HCT116 (cell line): ENCODE measurements at regions of chr4 and their contacts with region 1.

Region 1: DNA sequence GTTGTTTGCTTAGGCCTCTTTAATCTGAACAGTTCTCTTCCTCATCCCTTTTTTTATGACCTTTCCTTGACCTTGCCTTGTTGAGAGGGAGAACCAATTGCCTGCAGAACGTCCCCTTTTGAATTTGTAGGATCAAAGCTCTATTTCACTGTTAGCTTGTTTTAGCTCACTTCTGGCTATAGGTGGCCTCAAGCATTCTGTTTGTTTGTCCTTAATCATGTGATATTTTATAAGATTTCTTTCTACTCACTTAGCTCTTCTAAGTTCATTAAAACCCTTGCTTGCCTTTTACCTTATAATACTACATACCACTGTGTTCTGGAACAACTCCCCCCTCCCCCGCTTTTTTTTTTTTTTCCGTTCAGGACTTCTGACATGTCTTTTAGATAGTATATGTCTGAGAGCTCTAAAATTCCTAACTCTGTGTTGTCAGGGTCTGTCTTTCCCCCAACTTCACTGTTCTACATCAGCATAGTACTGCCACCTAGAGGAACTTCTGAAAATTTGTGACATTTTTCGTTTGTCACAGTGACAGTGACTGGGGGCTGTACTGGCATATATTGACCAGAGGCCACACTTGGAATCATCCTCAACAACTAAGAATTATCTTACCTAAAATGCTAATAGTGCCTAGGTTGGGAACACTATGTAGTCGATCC is 128.5 kb downstream of the LARP7 start:
- DNase-seq: peak; percentile 43
- ATAC-seq: peak; percentile 83
- H3K4me3 ChIP-seq: no peak overlapping the region
- H3K27ac ChIP-seq: no peak overlapping the region
- H3K4me1 ChIP-seq: peaks cover 0 to 8% of the 10 kb centered on the region in 2 experiments; a peak in 2 of 4 replicates
- H3K27me3 ChIP-seq: no peaks in the 10 kb centered on the region
- CTCF ChIP-seq: peak; percentile 44 to 66 (median 53); a peak in 5 of 6 replicates
- POLR2A ChIP-seq: no peak
- RAD21 ChIP-seq: peak; percentile 64

Region 2: DNA sequence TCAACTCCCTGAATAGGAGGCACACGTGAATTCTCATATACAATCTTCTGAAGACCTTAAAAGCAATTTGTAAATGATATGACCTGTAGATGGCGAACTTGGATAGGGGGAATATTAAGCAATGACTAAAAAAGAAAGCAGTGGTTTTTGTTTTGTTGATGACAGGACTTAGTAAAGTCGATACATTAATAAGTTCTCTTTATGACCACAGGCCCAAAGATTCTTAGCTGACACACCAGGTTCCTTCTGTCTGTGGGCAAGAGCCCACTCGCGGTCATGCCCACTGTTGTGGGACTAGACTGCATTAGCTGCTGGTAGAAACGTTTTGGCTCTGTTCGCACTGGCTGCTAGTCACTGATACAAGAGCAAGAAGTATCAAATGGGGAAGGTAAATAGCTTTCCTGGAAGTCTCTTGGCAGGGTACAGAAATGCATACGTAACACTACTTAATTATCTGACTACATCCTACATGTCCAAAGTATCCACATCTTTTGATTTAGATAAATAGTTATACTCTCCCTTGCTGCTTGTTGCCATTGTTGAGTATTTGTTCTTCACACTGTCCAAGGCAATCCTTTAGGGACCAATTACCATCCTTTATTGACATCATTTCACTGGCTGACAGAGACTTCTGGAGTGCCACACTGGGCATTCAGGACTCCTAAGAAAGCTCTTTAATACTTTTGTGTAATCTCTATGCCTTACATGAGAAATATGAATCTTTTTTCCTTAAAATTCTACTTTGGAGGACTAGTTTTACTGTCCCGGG is 437.3 kb before region 1 on chr4:
- CTCF ChIA-PET with region 1: no interaction called
- POLR2A ChIA-PET with region 1: no interaction called
- RAD21 ChIA-PET with region 1: no interaction called
- intact Hi-C with region 1: loop called (anchors 5 kb)
- DNase-seq: peak; percentile 32
- ATAC-seq: peak; percentile 63; the same call in 1 of the 2 replicates
- H3K4me3 ChIP-seq: no peak overlapping the region
- H3K27ac ChIP-seq: no peak overlapping the region
- H3K4me1 ChIP-seq: no peaks in the 10 kb centered on the region
- H3K27me3 ChIP-seq: no peaks in the 10 kb centered on the region
- CTCF ChIP-seq: peak; percentile 37 to 67 (median 62); a peak in 5 of 6 replicates
- POLR2A ChIP-seq: no peak
- RAD21 ChIP-seq: peak; percentile 73

Region 3: DNA sequence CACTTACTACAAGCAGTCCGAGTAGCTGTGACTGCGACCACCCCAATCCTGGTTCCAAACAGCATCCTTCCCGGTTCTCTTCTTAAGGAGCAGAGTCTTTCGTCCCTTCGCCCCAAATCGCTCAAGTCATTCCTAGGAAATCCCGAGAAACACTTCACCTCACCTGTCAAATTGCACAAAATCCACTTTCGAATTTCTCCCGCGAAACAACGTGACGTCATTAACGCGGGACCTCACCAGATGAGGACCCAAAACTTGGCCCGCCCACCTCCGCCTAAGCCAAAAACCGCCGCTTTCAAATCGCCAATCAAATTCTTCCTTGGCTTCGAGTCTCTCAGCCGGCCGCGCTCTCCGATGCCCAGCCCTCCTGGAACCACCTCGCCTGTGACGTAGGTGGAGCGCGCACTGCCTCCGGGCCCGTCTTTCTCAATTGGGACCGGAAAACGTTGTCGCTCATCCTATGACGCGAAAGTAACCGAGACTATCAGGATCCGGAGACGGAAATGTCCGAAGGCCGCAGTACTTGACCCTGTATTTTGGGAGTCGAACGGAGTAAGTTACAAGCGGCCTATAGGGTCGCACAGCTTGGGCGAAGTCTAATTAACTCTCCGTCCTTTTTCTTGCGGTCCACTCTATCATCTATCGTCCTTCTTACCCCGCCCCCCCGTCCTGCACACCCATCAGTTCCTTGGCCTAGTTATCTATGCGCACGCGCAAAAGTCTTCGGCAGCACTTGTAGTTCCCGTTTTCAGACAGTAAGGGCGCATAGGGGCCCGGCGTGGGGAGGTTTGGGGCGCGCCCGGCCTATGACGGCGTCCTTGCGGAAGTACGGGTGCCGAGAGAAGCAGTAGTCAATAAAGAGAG is 128.5 kb before region 1 on chr4 and contains the starts of genes LARP7 and ZGRF1:
- CTCF ChIA-PET with region 1: interaction called, 15 read pairs
- POLR2A ChIA-PET with region 1: no interaction called
- RAD21 ChIA-PET with region 1: no interaction called
- intact Hi-C with region 1: loop called (anchors 1 kb)
- DNase-seq: peak; percentile 99
- ATAC-seq: peak; percentile 93
- H3K4me3 ChIP-seq: peak within 1 kb of the TSS; percentile 72 to 87
- H3K27ac ChIP-seq: peak within 1 kb of the TSS; percentile 66
- H3K4me1 ChIP-seq: peaks cover 3 to 17% of the 10 kb centered on the region in 2 experiments; a peak in 3 of 4 replicates
- H3K27me3 ChIP-seq: no peaks in the 10 kb centered on the region
- CTCF ChIP-seq: peak; percentile 18 to 67 (median 67); a peak in 4 of 6 replicates
- POLR2A ChIP-seq: peak; percentile 21
- RAD21 ChIP-seq: no peak
- total RNA-seq, gene LARP7: 39.5 TPM
- total RNA-seq, gene ZGRF1: 21.4 TPM

Region 4: DNA sequence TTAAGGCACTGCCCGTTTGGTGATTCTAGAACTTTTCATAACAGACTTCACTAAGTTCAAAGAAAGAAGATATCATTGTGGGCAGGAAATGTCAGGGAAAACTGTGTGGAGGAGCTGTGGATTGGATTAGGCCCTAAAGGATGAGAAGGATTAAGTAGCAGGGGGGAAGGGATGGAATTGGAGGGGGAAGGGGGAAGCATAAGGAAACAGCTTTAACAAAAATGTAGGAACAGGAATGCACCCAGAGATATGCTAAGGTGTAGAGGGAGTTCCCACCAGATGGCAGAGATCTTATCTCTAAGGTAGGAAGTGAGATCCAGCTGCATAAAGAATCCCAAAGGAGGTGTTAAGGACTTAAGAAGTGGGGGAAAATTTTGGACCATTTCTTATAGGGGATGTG is 14.0 kb before region 1 on chr4:
- CTCF ChIA-PET with region 1: interaction called, 15 read pairs
- POLR2A ChIA-PET with region 1: no interaction called
- RAD21 ChIA-PET with region 1: no interaction called
- intact Hi-C with region 1: no loop called
- DNase-seq: no peak
- ATAC-seq: no peak
- H3K4me3 ChIP-seq: no peak overlapping the region
- H3K27ac ChIP-seq: no peak overlapping the region
- H3K4me1 ChIP-seq: peaks cover 10 to 34% of the 10 kb centered on the region in 2 experiments
- H3K27me3 ChIP-seq: no peaks in the 10 kb centered on the region
- CTCF ChIP-seq: no peak
- POLR2A ChIP-seq: no peak
- RAD21 ChIP-seq: no peak

Region 5: GRCh38 chr4:112938461-112939058 is 173.1 kb after region 1 on chr4:
- CTCF ChIA-PET with region 1: interaction called, 25 read pairs
- POLR2A ChIA-PET with region 1: no interaction called
- RAD21 ChIA-PET with region 1: interaction called, 4 to 5 read pairs
- intact Hi-C with region 1: loop called (anchors 1 kb)
- DNase-seq: peak; percentile 31
- ATAC-seq: peak; percentile 59
- H3K4me3 ChIP-seq: no peak overlapping the region
- H3K27ac ChIP-seq: no peak overlapping the region
- H3K4me1 ChIP-seq: no peaks in the 10 kb centered on the region
- H3K27me3 ChIP-seq: no peaks in the 10 kb centered on the region
- CTCF ChIP-seq: peak; percentile 72 to 88 (median 86)
- POLR2A ChIP-seq: no peak
- RAD21 ChIP-seq: peak; percentile 81

Region 6: GRCh38 chr4:112951362-112952312 is 186.2 kb after region 1 on chr4:
- CTCF ChIA-PET with region 1: interaction called, 14 read pairs
- POLR2A ChIA-PET with region 1: no interaction called
- RAD21 ChIA-PET with region 1: no interaction called
- intact Hi-C with region 1: no loop called
- DNase-seq: no peak
- ATAC-seq: no peak
- H3K4me3 ChIP-seq: no peak overlapping the region
- H3K27ac ChIP-seq: no peak overlapping the region
- H3K4me1 ChIP-seq: no peaks in the 10 kb centered on the region
- H3K27me3 ChIP-seq: no peaks in the 10 kb centered on the region
- CTCF ChIP-seq: peak; percentile 32 to 66 (median 49); a peak in 5 of 6 replicates
- POLR2A ChIP-seq: no peak
- RAD21 ChIP-seq: 0 out of 2 replicates have a peak, but pooled peaks have one; percentile 10

Region 7: GRCh38 chr4:113094802-113095201 is 329.4 kb after region 1 on chr4:
- CTCF ChIA-PET with region 1: no interaction called
- POLR2A ChIA-PET with region 1: interaction called, 3 read pairs
- RAD21 ChIA-PET with region 1: no interaction called
- intact Hi-C with region 1: loop called (anchors 5 kb)
- DNase-seq: peak; percentile 19
- ATAC-seq: peak; percentile 60
- H3K4me3 ChIP-seq: no peak overlapping the region
- H3K27ac ChIP-seq: no peak overlapping the region
- H3K4me1 ChIP-seq: no peaks in the 10 kb centered on the region
- H3K27me3 ChIP-seq: no peaks in the 10 kb centered on the region
- CTCF ChIP-seq: peak; percentile 53 to 85 (median 70); a peak in 5 of 6 replicates
- POLR2A ChIP-seq: no peak
- RAD21 ChIP-seq: peak; percentile 77